MCF 10A (cell line): ENCODE measurements at regions of chr5 and their contacts with region 1.

Region 1: DNA sequence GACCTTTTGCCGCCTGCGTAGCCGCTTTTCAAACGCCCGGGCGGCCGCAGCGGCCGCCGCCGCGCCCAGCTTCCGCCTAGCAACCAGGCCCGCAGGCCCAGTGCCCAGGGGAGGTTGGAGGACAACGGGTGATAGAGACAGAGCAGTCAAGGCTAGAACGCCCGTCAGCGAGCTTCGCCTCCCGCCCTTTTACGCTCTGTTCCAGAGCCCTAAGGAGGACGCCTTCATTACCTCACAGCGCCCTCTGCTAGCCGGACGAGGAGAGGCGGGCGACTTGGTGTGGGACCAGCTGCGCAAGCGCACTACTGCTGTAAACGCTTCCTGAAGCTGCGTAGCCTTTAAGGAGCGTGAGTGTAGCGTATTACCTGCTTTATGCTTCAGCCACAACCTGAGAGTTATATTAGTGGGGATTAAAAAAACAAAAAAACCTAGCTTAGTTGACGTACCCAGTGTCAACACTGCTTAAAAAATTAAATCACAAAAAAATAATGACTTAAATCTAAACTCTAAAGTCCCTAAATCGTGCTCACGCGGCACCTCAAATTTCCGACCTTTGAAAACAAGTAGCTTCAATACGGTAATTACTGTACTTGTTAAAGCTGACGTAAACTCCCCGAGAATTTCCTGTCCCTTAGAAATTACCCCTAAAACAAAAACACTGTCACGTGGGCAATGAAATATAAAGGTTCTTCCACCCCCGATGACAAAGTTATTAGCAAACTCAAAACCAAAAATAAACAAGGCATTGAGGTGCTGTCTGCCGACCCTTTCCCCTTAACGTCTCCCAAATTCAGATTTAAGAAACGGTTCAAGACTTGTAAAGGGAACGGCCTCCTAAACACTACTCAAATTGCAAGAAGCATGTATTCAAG is at the start of gene CEP120:
- DNase-seq: peak; percentile 100
- H3K4me3 Mint-ChIP-seq: no peak within 1 kb of the TSS
- H3K27ac Mint-ChIP-seq: no peak within 1 kb of the TSS
- H3K4me1 Mint-ChIP-seq: peaks cover 15% of the 10 kb centered on the region
- H3K27me3 Mint-ChIP-seq: no peaks in the 10 kb centered on the region
- CTCF ChIP-seq: peak; percentile 87
- total RNA-seq, gene CEP120: 49.8 and 54.5 TPM in 2 replicates

Region 2: DNA sequence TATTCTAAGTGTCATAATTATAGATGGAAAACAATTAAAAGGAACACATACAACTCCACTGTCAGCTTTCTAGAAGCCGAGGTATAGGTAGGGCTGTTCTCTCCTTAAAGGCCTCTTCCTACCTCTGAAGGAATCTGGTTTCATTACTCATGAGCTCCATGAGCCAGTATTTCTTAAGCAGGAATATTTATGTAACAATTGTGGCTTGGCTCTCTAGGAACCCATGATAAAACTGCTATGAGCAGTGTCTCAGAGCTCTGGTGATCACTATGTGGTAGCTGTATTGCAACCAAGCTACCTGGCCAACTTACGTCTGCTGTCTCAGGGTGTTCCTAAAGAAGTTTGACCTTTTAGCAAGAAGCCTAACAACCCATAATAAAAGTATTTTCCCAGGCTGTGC is 158.0 kb before region 1 on chr5:
- CTCF ChIA-PET with region 1: no interaction called
- POLR2A ChIA-PET with region 1: no interaction called
- intact Hi-C with region 1: no loop called
- DNase-seq: peak; percentile 28
- H3K4me3 Mint-ChIP-seq: no peak overlapping the region
- H3K27ac Mint-ChIP-seq: no peak overlapping the region
- H3K4me1 Mint-ChIP-seq: peaks cover 6% of the 10 kb centered on the region
- H3K27me3 Mint-ChIP-seq: no peaks in the 10 kb centered on the region
- CTCF ChIP-seq: no peak

Region 3: GRCh38 chr5:123412206-123412605 is 11.3 kb before region 1 on chr5:
- CTCF ChIA-PET with region 1: interaction called, 10 read pairs
- POLR2A ChIA-PET with region 1: interaction called, 7 read pairs
- intact Hi-C with region 1: no loop called
- DNase-seq: no peak
- H3K4me3 Mint-ChIP-seq: no peak overlapping the region
- H3K27ac Mint-ChIP-seq: no peak overlapping the region
- H3K4me1 Mint-ChIP-seq: peaks cover 6% of the 10 kb centered on the region
- H3K27me3 Mint-ChIP-seq: no peaks in the 10 kb centered on the region
- CTCF ChIP-seq: no peak

Region 4: GRCh38 chr5:123486951-123487655 is 63.6 kb after region 1 on chr5:
- CTCF ChIA-PET with region 1: interaction called, 11 read pairs
- POLR2A ChIA-PET with region 1: interaction called, 43 read pairs
- intact Hi-C with region 1: no loop called
- DNase-seq: peak; percentile 72
- H3K4me3 Mint-ChIP-seq: peak overlapping the region; percentile 45
- H3K27ac Mint-ChIP-seq: peak overlapping the region; percentile 72
- H3K4me1 Mint-ChIP-seq: peaks cover 24% of the 10 kb centered on the region
- H3K27me3 Mint-ChIP-seq: no peaks in the 10 kb centered on the region
- CTCF ChIP-seq: no peak

Region 5: GRCh38 chr5:123511648-123512605 is 88.4 kb after region 1 on chr5 and contains the start of gene CSNK1G3:
- CTCF ChIA-PET with region 1: interaction called, 18 read pairs
- POLR2A ChIA-PET with region 1: interaction called, 418 read pairs
- intact Hi-C with region 1: loop called (anchors 1 kb)
- DNase-seq: peak; percentile 99
- H3K4me3 Mint-ChIP-seq: peak within 1 kb of the TSS; percentile 91
- H3K27ac Mint-ChIP-seq: peak within 1 kb of the TSS; percentile 97
- H3K4me1 Mint-ChIP-seq: peaks cover 39% of the 10 kb centered on the region
- H3K27me3 Mint-ChIP-seq: no peaks in the 10 kb centered on the region
- CTCF ChIP-seq: no peak
- total RNA-seq, gene CSNK1G3: 92.8 and 110 TPM in 2 replicates

Region 6: DNA sequence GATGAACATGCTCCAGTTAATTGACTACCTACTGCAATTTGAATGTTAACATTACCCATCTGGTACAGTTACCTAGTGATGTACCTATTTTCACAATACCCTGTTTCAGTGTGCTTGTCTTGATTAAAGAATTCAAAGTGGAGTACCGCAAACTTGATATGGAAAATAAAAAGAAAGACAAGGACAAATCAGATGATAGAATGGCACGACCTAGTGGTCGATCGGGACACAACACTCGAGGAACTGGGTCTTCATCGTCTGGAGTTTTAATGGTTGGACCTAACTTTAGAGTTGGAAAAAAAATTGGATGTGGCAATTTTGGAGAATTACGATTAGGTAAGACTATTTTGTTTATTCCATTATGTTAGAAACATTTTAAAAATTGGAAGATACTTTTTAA is 122.0 kb after region 1 on chr5:
- CTCF ChIA-PET with region 1: interaction called, 12 read pairs
- POLR2A ChIA-PET with region 1: interaction called, 72 read pairs
- intact Hi-C with region 1: loop called (anchors 1 kb)
- DNase-seq: peak; percentile 77
- H3K4me3 Mint-ChIP-seq: no peak overlapping the region
- H3K27ac Mint-ChIP-seq: no peak overlapping the region
- H3K4me1 Mint-ChIP-seq: peaks cover 24% of the 10 kb centered on the region
- H3K27me3 Mint-ChIP-seq: no peaks in the 10 kb centered on the region
- CTCF ChIP-seq: peak; percentile 64

Region 7: GRCh38 chr5:123605822-123606221 is 182.3 kb after region 1 on chr5:
- CTCF ChIA-PET with region 1: interaction called, 50 read pairs
- POLR2A ChIA-PET with region 1: interaction called, 46 read pairs
- intact Hi-C with region 1: loop called (anchors 1 kb)
- DNase-seq: no peak
- H3K4me3 Mint-ChIP-seq: no peak overlapping the region
- H3K27ac Mint-ChIP-seq: no peak overlapping the region
- H3K4me1 Mint-ChIP-seq: no peaks in the 10 kb centered on the region
- H3K27me3 Mint-ChIP-seq: no peaks in the 10 kb centered on the region
- CTCF ChIP-seq: no peak